T-cell (primary cell): ENCODE measurements at regions of chr17 and their contacts with region 1.

Region 1: GRCh38 chr17:10162096-10162495 is 36.3 kb downstream of the GAS7 start:
- DNase-seq: no peak
- ATAC-seq: no peak
- H3K4me3 ChIP-seq: no peak overlapping the region
- H3K4me3 Mint-ChIP-seq: no peak overlapping the region
- H3K27ac ChIP-seq: no peak overlapping the region
- H3K27ac Mint-ChIP-seq: no peak overlapping the region
- H3K4me1 ChIP-seq: peaks cover 0 to 4% of the 10 kb centered on the region in 2 experiments
- H3K4me1 Mint-ChIP-seq: peaks cover 0 to 6% (median 2%) of the 10 kb centered on the region in 3 donors
- H3K27me3 ChIP-seq: no peaks in the 10 kb centered on the region
- H3K27me3 Mint-ChIP-seq: peaks cover 0 to 1% of the 10 kb centered on the region in 2 donors

Region 2: DNA sequence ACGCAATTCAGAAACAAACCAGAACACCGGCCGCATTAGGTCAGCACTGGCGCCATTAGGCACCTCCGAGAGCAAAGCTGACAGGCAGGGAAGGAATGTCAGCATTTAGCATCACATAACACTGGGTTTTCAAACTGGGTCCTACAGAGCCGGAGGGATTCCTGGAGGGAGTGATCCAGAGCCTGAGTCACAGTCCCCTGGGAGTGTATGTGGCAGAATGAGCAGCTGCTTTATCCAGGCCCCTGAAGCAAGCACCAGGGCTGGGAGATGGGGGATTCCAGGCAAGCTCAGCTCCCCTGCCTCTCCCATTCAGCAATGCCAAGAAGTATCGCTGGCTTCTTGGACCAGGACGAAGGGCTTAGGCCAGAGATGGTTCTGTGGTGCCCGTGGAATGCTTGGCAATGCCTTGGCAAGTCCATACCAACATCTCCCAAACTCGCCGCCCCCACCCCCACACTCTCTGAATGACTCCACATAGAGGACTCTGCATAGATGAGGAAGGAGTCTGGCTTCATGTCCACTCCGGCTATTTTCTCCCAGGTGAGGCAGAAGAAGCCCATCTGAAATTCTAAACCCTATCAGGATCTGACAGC is 15.9 kb after region 1 on chr17:
- CTCF ChIA-PET with region 1: no interaction called
- POLR2A ChIA-PET with region 1: interaction called in 1 of 2 experiments, 10 read pairs
- DNase-seq: no peak
- ATAC-seq: no peak
- H3K4me3 ChIP-seq: no peak overlapping the region
- H3K4me3 Mint-ChIP-seq: no peak overlapping the region
- H3K27ac ChIP-seq: no peak overlapping the region
- H3K27ac Mint-ChIP-seq: no peak overlapping the region
- H3K4me1 ChIP-seq: peaks cover 0 to 8% of the 10 kb centered on the region in 2 experiments
- H3K4me1 Mint-ChIP-seq: peaks cover 0 to 13% (median 2%) of the 10 kb centered on the region in 3 donors
- H3K27me3 ChIP-seq: peaks cover 0 to 4% of the 10 kb centered on the region in 2 experiments
- H3K27me3 Mint-ChIP-seq: peaks cover 2 to 5% of the 10 kb centered on the region in 2 donors